CD14-positive monocyte (primary cell): ENCODE measurements at regions of chr9 and their contacts with region 1.

Region 1: DNA sequence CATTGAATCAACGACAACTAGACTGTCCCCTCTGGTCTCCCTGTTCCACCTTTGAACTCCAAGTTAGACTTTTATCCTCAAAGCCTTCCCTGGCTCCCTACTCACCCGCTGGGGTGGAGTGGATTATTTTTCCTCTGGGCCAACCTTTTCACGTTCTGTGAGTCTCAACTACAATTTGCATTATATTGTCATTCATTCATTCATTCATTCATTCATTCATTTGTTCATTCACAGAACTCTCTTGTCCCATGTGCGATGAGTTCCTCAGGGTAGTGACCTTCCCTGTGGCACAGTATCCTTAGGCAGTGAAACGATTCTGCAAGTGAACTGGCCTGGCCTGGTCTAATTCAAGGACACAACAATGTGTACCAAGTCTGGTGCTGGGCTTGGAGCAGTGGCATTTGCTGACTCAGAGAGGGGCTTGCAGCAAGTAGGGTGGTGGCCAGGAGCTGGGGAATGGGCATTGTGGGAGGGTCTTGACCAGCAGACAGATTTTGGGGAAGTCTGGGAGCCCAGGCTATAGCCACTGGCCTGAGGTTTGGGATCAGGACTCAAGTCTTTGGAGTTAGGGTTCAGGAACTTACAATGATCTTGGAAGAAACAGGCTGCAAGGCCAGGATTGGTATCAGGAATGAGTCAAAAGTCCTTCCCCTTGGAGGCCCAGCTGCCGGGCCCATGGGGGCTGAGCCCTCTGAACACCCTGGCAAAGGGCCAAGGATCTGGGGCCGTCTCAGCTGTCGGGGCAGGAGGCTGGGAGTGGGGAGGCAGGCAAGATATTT is 37.3 kb upstream of the COL15A1 start:
- DNase-seq: no peak
- H3K4me3 ChIP-seq: no peak overlapping the region
- H3K4me3 Mint-ChIP-seq: no peak overlapping the region
- H3K27ac ChIP-seq: no peak overlapping the region
- H3K27ac Mint-ChIP-seq: no peak overlapping the region
- H3K4me1 ChIP-seq: no peaks in the 10 kb centered on the region
- H3K4me1 Mint-ChIP-seq: no peaks in the 10 kb centered on the region
- H3K27me3 ChIP-seq: no peaks in the 10 kb centered on the region
- H3K27me3 Mint-ChIP-seq: peaks cover 0 to 2% (median 0%) of the 10 kb centered on the region in 3 donors
- CTCF ChIP-seq: no peak

Region 2: GRCh38 chr9:98142182-98142907 is 764.1 kb before region 1 on chr9:
- intact Hi-C with region 1: no loop called
- DNase-seq: peak in 2 of 3 donors; percentile 25
- H3K4me3 ChIP-seq: no peak overlapping the region
- H3K4me3 Mint-ChIP-seq: no peak overlapping the region
- H3K27ac ChIP-seq: peak overlapping the region; percentile 56 to 65
- H3K27ac Mint-ChIP-seq: peak overlapping the region; percentile 52 to 83 (median 73)
- H3K4me1 ChIP-seq: peaks cover 34 to 37% of the 10 kb centered on the region in 2 donors
- H3K4me1 Mint-ChIP-seq: peaks cover 45% of the 10 kb centered on the region
- H3K27me3 ChIP-seq: no peaks in the 10 kb centered on the region
- H3K27me3 Mint-ChIP-seq: no peaks in the 10 kb centered on the region
- CTCF ChIP-seq: no peak

Region 3: GRCh38 chr9:98766586-98766985 is 139.9 kb before region 1 on chr9:
- intact Hi-C with region 1: no loop called
- DNase-seq: peak; percentile 57 to 81 (median 72)
- H3K4me3 ChIP-seq: peak overlapping the region in 1 of 3 experiments; percentile 38
- H3K4me3 Mint-ChIP-seq: peak overlapping the region in 1 of 2 donors; percentile 40
- H3K27ac ChIP-seq: peak overlapping the region in 1 of 2 donors; percentile 48
- H3K27ac Mint-ChIP-seq: peak overlapping the region in 5 of 7 donors; percentile 25 to 86 (median 79)
- H3K4me1 ChIP-seq: peaks cover 23 to 27% of the 10 kb centered on the region in 2 donors
- H3K4me1 Mint-ChIP-seq: peaks cover 37% of the 10 kb centered on the region
- H3K27me3 ChIP-seq: no peaks in the 10 kb centered on the region
- H3K27me3 Mint-ChIP-seq: peaks cover 0 to 3% (median 0%) of the 10 kb centered on the region in 3 donors
- CTCF ChIP-seq: no peak

Region 4: DNA sequence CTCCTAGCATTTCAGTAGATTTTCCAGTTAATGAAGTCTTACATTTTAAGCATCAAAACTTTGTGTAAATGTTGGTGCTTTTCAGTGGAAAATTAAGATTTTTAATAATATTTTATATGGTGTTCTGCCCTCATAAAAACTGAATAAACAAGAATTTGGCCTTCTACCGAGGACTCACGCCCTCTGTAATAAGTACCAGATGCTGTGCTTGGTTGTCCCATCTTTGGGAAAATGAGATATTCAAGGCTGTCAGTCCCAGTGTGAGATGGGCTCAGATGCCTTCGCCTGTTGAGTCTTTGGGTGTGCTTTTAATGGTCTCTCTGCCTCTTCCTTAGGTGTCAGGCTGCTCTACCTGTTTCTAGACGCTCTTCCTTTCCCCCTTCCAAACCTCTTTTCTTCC is 70.2 kb before region 1 on chr9:
- intact Hi-C with region 1: loop called in 1 of 2 experiments (anchors 2 kb)
- DNase-seq: no peak
- H3K4me3 ChIP-seq: no peak overlapping the region
- H3K4me3 Mint-ChIP-seq: no peak overlapping the region
- H3K27ac ChIP-seq: no peak overlapping the region
- H3K27ac Mint-ChIP-seq: no peak overlapping the region
- H3K4me1 ChIP-seq: peaks cover 0 to 3% of the 10 kb centered on the region in 2 donors
- H3K4me1 Mint-ChIP-seq: peaks cover 10% of the 10 kb centered on the region
- H3K27me3 ChIP-seq: no peaks in the 10 kb centered on the region
- H3K27me3 Mint-ChIP-seq: peaks cover 1 to 2% (median 2%) of the 10 kb centered on the region in 3 donors
- CTCF ChIP-seq: no peak

Region 5: DNA sequence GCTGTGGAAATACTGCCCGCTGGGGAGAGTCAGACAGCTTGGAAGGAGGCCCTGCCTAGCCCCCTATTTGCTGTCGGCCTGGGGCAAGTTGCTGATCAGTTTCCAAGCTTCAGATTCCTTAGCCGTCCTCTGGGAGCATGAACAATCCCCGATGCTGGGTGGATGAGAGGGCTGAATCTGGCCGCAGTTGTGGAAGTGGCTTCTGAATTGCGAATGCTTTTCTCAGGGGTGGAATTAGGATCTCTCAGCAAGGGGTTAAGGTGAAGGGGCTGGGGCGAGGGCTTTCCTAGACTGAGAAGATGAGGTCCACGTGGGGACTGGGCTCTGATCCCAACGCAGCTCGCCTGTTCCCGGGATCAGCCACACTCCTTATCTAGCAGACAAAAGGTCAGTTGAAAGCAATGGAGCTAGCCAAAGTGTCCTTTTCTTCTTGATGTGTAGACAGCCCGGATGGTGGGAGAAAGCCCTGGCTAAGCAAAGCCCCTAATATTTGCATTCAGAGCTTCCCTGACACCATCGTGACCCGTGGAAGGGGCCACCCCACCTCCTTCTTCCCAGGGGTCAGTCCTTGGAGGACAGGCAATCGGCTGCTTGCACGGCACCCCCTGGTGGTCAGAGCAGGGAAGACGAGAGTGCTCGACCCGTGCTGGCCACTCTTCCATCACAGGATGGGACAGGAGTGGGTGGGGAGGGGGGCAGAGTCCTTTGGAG is 92.1 kb after region 1 on chr9:
- intact Hi-C with region 1: no loop called
- DNase-seq: peak; percentile 50 to 70 (median 67)
- H3K4me3 ChIP-seq: no peak overlapping the region
- H3K4me3 Mint-ChIP-seq: no peak overlapping the region
- H3K27ac ChIP-seq: no peak overlapping the region
- H3K27ac Mint-ChIP-seq: peak overlapping the region in 3 of 7 donors; percentile 13 to 48 (median 19)
- H3K4me1 ChIP-seq: peaks cover 17 to 34% of the 10 kb centered on the region in 2 donors
- H3K4me1 Mint-ChIP-seq: peaks cover 25% of the 10 kb centered on the region
- H3K27me3 ChIP-seq: peaks cover 0 to 7% of the 10 kb centered on the region in 2 donors
- H3K27me3 Mint-ChIP-seq: peaks cover 26 to 43% (median 39%) of the 10 kb centered on the region in 3 donors
- CTCF ChIP-seq: peak; percentile 93

Region 6: GRCh38 chr9:99092643-99093491 is 186.4 kb after region 1 on chr9:
- intact Hi-C with region 1: no loop called
- DNase-seq: no peak
- H3K4me3 ChIP-seq: no peak overlapping the region
- H3K4me3 Mint-ChIP-seq: no peak overlapping the region
- H3K27ac ChIP-seq: no peak overlapping the region
- H3K27ac Mint-ChIP-seq: no peak overlapping the region
- H3K4me1 ChIP-seq: no peaks in the 10 kb centered on the region
- H3K4me1 Mint-ChIP-seq: peaks cover 2% of the 10 kb centered on the region
- H3K27me3 ChIP-seq: no peaks in the 10 kb centered on the region
- H3K27me3 Mint-ChIP-seq: peaks cover 1 to 9% (median 3%) of the 10 kb centered on the region in 3 donors
- CTCF ChIP-seq: no peak